ENCODE measurements at regions of chr17 and their contacts with region 1.

Region 1: DNA sequence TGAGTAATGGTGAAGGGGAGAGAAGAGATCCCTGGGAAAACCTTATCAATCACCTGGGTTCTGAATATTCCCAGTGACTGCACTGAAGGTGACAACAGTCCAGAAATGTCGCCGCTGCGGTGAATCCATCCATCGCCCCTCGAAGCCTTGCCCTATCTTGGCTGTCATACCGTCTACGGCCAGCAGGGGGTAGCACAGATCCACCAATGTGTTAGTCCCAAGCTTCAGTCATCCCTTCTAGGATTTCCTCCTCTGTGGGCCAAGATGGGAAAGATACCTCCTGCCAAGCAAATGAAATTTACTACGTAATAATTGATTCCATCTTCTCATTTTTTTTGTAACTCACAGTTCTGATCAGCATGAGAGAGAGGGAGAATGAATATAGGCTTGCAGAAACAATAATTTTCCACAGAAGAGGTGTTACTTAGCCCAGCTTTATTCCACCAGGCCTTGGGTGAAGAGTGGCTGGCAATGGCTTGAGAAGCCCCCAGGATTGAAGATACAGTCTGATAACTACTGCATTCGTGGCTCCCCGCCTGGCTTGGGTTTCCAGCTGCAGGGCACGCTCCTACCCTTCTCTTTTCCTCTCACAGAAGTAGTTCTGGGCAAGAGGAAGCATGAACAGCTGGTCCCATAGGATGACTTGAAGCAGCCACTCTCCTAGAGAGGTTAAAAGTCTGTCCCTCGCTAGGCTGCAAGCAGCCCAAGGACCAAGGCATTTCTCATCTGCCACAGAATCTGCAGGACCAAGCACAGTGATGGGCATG is 2.6 kb upstream of the FMNL1 start:
- DNase-seq: peak; percentile 86
- H3K4me3 ChIP-seq: peak overlapping the region in 1 of 2 experiments; percentile 28; a peak in 1 of 4 replicates
- H3K27ac ChIP-seq: no peak overlapping the region
- H3K4me1 ChIP-seq: peaks cover 0 to 24% of the 10 kb centered on the region in 2 experiments; a peak in 1 of 4 replicates
- H3K27me3 ChIP-seq: no peaks in the 10 kb centered on the region
- CTCF ChIP-seq: peak; percentile 93
- EP300 ChIP-seq: no peak; a peak in 1 of 4 replicates
- RAD21 ChIP-seq: peak; percentile 100

Region 2: GRCh38 chr17:45172454-45173286 is 46.4 kb before region 1 on chr17:
- CTCF ChIA-PET with region 1: interaction called, 10 read pairs
- POLR2A ChIA-PET with region 1: no interaction called
- DNase-seq: peak; percentile 93
- H3K4me3 ChIP-seq: peak overlapping the region; percentile 25 to 30; a peak in 3 of 4 replicates
- H3K27ac ChIP-seq: peak overlapping the region; percentile 89 to 94
- H3K4me1 ChIP-seq: peaks cover 29 to 40% of the 10 kb centered on the region in 2 experiments; a peak in 3 of 4 replicates
- H3K27me3 ChIP-seq: no peaks in the 10 kb centered on the region
- CTCF ChIP-seq: peak; percentile 28; the same call in 1 of the 2 replicates
- EP300 ChIP-seq: peak; percentile 34 to 66; a peak in 2 of 4 replicates
- RAD21 ChIP-seq: peak; percentile 6; the same call in 1 of the 2 replicates

Region 3: GRCh38 chr17:45235416-45236281 is 16.6 kb after region 1 on chr17:
- CTCF ChIA-PET with region 1: interaction called, 232 read pairs
- POLR2A ChIA-PET with region 1: interaction called, 3 read pairs
- DNase-seq: peak; percentile 81
- H3K4me3 ChIP-seq: no peak overlapping the region
- H3K27ac ChIP-seq: no peak overlapping the region
- H3K4me1 ChIP-seq: peaks cover 4 to 16% of the 10 kb centered on the region in 2 experiments; a peak in 2 of 4 replicates
- H3K27me3 ChIP-seq: no peaks in the 10 kb centered on the region
- CTCF ChIP-seq: peak; percentile 83
- EP300 ChIP-seq: no peak
- RAD21 ChIP-seq: peak; percentile 65

Region 4: DNA sequence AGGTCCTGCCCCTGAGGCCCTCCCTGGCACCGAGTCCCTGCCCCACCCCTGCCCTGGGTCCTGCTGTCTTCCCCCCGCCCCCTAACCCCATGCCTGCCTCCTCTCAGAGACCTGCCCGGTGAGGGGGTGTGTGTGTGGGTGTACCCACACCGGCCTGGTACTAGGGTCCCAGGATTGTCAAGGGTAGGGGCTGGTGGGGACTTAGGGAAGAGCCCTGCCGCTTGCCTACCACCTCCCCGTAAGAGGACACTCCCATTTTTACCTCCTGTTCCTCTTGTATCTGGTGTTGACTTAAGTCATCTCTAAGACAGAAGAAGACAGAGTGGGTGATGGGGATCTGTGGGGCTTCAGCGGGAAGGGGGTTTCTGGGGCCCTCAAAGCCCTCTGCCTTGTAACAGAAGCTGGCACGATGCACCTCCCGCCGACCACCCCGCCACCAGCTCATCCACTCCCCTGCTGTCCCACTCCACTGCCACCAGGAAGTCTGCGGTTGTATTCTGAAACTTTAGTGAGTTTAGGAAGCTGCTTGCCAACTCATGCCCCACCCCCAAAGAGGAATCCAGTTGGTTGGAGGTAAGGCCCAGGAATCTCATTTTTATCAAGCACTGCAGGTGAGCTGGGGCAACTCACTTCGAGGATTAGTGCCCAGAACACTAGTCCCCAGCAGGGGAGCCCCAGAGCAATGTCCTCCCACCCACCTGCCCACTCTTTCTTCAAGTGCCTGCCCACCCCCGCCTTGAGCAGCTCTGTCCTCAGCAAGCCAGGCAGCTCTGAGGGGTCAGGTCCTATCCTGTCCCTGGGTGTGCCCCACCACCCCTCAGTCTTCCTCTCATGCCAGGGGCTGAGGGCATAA is 37.3 kb after region 1 on chr17:
- CTCF ChIA-PET with region 1: interaction called, 10 read pairs
- POLR2A ChIA-PET with region 1: no interaction called
- DNase-seq: no peak
- H3K4me3 ChIP-seq: no peak overlapping the region
- H3K27ac ChIP-seq: no peak overlapping the region
- H3K4me1 ChIP-seq: no peaks in the 10 kb centered on the region; a peak in 1 of 4 replicates
- H3K27me3 ChIP-seq: no peaks in the 10 kb centered on the region
- CTCF ChIP-seq: no peak; the same call in none of the 2 replicates
- EP300 ChIP-seq: no peak
- RAD21 ChIP-seq: no peak

Region 5: DNA sequence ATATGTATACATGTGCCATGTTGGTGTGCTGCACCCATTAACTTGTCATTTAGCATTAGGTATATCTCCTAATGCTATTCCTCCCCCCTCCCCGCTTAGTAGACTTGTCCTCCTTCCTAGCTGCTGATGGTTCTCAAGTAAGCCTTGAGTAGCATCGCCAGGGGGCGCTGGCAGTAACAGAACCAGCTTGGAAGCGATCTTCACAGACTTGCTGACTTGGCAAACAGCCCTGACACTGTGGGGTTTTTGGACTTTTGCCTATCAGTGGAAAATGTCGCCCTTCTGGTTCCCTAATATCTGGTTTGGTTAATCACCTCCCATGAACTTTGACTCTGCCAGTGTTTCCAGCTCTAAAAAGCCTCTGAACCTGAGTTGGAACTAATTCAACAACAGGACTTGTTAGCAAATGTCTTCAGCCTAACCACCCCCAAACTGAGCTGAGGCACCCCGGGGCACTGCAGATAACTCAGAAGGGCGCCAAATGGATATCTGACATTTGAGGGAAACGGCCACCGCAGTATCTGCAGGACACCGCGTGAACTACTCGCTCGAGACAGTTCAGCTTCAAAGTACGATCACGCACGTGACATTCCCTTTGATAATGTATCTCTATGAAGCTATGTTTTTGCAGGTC is 58.3 kb after region 1 on chr17:
- CTCF ChIA-PET with region 1: interaction called, 16 read pairs
- POLR2A ChIA-PET with region 1: no interaction called
- DNase-seq: peak; percentile 67
- H3K4me3 ChIP-seq: no peak overlapping the region; a peak in 1 of 4 replicates
- H3K27ac ChIP-seq: peak overlapping the region in 1 of 2 experiments; percentile 63; a peak in 2 of 4 replicates
- H3K4me1 ChIP-seq: peaks cover 6% of the 10 kb centered on the region in 2 experiments; a peak in 2 of 4 replicates
- H3K27me3 ChIP-seq: no peaks in the 10 kb centered on the region
- CTCF ChIP-seq: peak; percentile 71
- EP300 ChIP-seq: no peak
- RAD21 ChIP-seq: peak; percentile 78

Region 6: DNA sequence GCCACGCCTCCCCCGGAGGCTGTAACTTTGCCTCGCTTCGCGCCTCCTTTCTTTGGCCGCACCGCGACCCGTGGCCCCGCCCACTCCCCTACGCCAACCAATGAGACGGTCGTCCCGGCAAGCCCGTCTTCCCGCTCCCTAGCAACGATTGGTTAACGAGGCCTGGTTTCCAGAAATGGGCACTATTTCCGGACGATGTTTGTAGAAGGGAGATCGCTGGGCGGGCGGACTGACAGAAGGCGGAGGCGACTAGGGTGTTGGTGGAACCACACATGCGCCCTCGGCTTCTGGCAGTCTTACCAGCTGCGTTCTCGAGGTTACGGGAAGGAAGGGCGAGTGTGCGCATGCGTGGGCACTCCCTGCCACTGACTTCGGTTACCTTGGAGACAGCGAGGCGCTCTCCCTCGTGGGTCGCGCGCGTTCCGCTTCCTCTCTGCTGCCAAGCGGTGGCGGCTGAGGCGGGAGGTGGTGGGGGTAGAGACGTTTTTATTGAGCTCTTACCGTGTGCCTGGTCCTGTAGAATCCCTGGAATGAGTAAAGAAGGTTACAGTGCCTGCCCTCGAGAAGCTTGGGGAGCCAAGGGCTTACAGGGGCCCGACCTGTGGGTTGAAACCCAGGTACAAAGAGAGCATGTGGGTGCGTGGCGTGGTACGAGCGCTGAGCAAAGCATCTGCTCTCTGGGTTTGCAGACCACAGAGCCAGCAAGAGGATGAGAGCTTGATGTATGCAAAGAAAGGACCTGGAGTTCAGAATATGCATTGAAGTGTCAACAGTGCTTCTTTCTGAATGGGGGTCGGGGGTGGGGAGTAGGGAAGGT is 98.2 kb after region 1 on chr17:
- CTCF ChIA-PET with region 1: interaction called, 21 read pairs
- POLR2A ChIA-PET with region 1: interaction called, 6 read pairs
- DNase-seq: peak; percentile 99
- H3K4me3 ChIP-seq: peak overlapping the region; percentile 87 to 93
- H3K27ac ChIP-seq: peak overlapping the region; percentile 95 to 99
- H3K4me1 ChIP-seq: peaks cover 47 to 58% of the 10 kb centered on the region in 2 experiments
- H3K27me3 ChIP-seq: no peaks in the 10 kb centered on the region
- CTCF ChIP-seq: no peak
- EP300 ChIP-seq: no peak
- RAD21 ChIP-seq: 0 out of 2 replicates have a peak, but pooled peaks have one; percentile 15